ENCODE measurements at regions of chr13 and their contacts with region 1.

Region 1: DNA sequence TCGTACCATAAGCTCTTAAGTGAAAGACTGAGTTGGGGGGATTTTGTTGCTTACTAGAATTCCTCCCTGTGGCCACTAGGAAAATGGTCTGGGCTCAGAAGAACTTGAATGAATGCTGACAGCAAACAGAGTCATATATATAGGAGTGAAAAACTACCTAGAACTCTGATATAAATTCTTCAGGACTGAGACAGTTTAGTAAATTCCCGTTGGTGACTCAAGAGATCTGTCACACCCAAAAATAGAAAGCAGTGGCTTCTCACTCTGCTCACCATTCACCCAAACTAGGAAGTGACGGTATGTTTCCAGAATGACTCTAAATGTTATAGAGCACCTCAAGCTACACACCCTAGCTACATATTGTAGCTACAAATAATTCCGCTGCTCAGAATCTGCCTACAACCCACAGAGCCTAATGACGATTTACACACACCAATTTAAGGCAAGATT is 116.2 kb downstream of the TBC1D4 start:
- DNase-seq: peak; percentile 78
- ATAC-seq: peak; percentile 97
- H3K4me3 ChIP-seq: peak overlapping the region; percentile 34
- H3K27ac ChIP-seq: peak overlapping the region; percentile 81
- H3K4me1 ChIP-seq: peaks cover 13% of the 10 kb centered on the region; the same call in 1 of the 2 replicates
- H3K27me3 ChIP-seq: no peaks in the 10 kb centered on the region
- CTCF ChIP-seq: no peak
- EP300 ChIP-seq: peak; percentile 83 to 86; a peak in 3 of 4 replicates
- POLR2A ChIP-seq: no peak
- RAD21 ChIP-seq: no peak

Region 2: GRCh38 chr13:74641586-74641985 is 724.2 kb before region 1 on chr13:
- CTCF ChIA-PET with region 1: no interaction called
- POLR2A ChIA-PET with region 1: no interaction called
- RAD21 ChIA-PET with region 1: no interaction called
- SMC1A ChIA-PET with region 1: no interaction called
- in situ Hi-C with region 1: no loop called
- intact Hi-C with region 1: no loop called
- DNase-seq: no peak
- ATAC-seq: no peak
- H3K4me3 ChIP-seq: no peak overlapping the region
- H3K27ac ChIP-seq: no peak overlapping the region
- H3K4me1 ChIP-seq: no peaks in the 10 kb centered on the region
- H3K27me3 ChIP-seq: peaks cover 0 to 2% of the 10 kb centered on the region in 2 experiments; a peak in 2 of 4 replicates
- CTCF ChIP-seq: no peak
- EP300 ChIP-seq: no peak
- POLR2A ChIP-seq: no peak
- RAD21 ChIP-seq: no peak

Region 3: DNA sequence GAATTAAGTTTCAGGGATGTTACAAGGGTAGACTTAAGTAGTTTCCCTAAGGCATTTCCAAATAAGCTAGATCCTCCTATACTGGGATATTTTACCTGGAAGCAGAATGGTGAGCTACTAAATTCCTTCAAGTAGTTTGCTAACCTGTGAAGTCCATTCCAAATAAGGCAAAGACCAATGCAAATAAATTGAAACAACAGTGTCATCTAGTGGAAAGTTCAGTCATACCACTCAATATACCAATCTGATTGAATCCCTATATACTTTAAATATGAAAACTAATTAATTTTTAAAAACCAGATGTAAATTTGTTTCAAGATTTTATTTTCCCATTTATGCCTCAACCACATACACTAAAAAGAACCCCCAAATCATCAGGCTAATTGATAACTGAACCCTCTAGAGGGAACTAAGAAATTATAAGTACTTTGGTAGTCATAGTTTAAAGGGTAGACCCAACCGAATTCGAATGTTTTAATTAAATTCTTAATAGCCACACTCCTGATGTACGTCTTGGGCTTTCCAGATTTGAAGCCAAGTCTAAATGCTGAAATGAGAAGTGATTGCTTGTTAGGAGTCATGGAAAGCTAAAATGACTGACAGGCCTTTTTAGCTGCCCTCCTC is 107.5 kb before region 1 on chr13:
- CTCF ChIA-PET with region 1: interaction called, 12 read pairs
- POLR2A ChIA-PET with region 1: no interaction called
- RAD21 ChIA-PET with region 1: interaction called, 8 read pairs
- SMC1A ChIA-PET with region 1: interaction called, 7 read pairs
- in situ Hi-C with region 1: no loop called
- intact Hi-C with region 1: no loop called
- DNase-seq: no peak
- ATAC-seq: peak; percentile 82
- H3K4me3 ChIP-seq: no peak overlapping the region
- H3K27ac ChIP-seq: no peak overlapping the region
- H3K4me1 ChIP-seq: no peaks in the 10 kb centered on the region
- H3K27me3 ChIP-seq: 0 out of 4 replicates have a peak, but pooled peaks cover 0 to 3% of the 10 kb centered on the region in 2 experiments
- CTCF ChIP-seq: peak; percentile 39 to 56 (median 53); a peak in 4 of 6 replicates
- EP300 ChIP-seq: no peak
- POLR2A ChIP-seq: no peak
- RAD21 ChIP-seq: peak; percentile 56

Region 4: DNA sequence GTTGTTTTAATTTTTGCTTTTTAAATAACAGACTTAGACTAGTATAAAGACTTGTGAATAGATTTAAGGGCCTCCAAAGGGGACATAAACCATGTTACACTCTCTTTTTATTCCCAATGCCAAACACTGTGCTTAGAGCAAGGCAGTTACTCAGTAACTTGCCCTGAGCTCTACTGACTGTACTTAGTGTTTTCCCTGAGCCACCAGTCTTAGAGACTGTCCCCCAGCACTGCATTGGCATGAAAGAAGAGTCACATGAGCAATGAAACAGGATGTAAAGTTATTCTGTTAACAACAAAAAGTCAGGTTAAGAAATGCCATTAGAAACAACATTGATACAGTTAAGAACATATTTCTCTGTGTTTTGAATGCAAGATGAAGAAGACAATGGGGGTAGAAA is 71.6 kb before region 1 on chr13:
- CTCF ChIA-PET with region 1: interaction called, 4 read pairs
- POLR2A ChIA-PET with region 1: no interaction called
- RAD21 ChIA-PET with region 1: interaction called, 10 read pairs
- SMC1A ChIA-PET with region 1: interaction called, 7 read pairs
- in situ Hi-C with region 1: no loop called
- intact Hi-C with region 1: no loop called
- DNase-seq: no peak
- ATAC-seq: peak; percentile 62
- H3K4me3 ChIP-seq: no peak overlapping the region
- H3K27ac ChIP-seq: no peak overlapping the region
- H3K4me1 ChIP-seq: peaks cover 3% of the 10 kb centered on the region
- H3K27me3 ChIP-seq: no peaks in the 10 kb centered on the region
- CTCF ChIP-seq: no peak
- EP300 ChIP-seq: no peak
- POLR2A ChIP-seq: no peak
- RAD21 ChIP-seq: no peak

Region 5: DNA sequence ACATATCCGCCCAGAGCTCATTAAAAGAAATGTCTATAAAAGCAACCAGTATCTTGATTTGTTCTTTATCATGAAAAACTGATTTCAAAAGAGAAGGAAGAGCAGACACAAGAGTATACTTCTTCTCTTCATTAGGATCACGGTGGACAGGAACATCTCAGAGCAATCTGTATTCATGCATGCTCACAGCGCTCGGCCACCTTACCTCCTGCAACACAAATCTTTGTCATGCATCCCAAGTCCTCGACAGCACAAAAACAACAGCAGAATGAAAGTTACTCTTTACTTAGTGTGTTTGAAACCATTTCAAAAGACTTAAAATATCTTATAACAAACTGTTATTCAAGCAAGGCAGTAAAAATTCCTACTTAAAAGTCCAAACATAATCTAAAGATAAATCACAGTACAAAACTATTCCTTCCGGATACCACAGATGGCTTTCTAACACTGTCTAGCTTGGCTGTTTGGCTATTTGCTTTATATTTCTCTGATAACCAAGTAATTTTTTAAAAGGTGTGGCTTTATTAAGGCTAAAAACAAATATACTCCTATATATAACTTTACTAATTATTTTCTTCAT is 58.3 kb before region 1 on chr13:
- CTCF ChIA-PET with region 1: interaction called, 5 read pairs
- POLR2A ChIA-PET with region 1: interaction called, 4 read pairs
- RAD21 ChIA-PET with region 1: interaction called, 33 read pairs
- SMC1A ChIA-PET with region 1: interaction called, 11 read pairs
- in situ Hi-C with region 1: no loop called
- intact Hi-C with region 1: no loop called
- DNase-seq: no peak
- ATAC-seq: no peak
- H3K4me3 ChIP-seq: no peak overlapping the region; the same call in 1 of the 2 replicates
- H3K27ac ChIP-seq: no peak overlapping the region
- H3K4me1 ChIP-seq: no peaks in the 10 kb centered on the region; the same call in 1 of the 2 replicates
- H3K27me3 ChIP-seq: no peaks in the 10 kb centered on the region
- CTCF ChIP-seq: no peak
- EP300 ChIP-seq: no peak
- POLR2A ChIP-seq: no peak
- RAD21 ChIP-seq: no peak

Region 6: DNA sequence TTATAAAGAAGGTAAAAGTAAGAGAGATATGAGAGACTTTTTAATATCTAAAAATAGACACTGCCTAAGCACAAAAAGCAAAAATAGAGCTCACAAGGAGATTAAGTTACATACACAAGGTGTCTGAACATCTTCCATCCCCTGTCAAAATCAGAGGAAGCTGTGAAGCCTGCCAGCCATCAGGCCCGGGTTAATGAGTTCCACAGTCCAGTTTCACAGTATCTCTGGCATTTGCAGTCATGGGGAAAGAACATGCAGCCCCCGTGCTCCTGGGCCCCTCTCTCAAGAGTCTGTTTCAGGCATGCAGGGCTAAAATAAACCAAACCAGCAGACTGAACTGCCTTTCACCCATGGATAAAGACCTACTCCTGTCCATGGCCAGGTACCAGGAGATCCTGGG is 37.0 kb after region 1 on chr13:
- CTCF ChIA-PET with region 1: interaction called, 31 read pairs
- POLR2A ChIA-PET with region 1: interaction called, 4 read pairs
- RAD21 ChIA-PET with region 1: interaction called, 8 read pairs
- SMC1A ChIA-PET with region 1: interaction called, 12 read pairs
- in situ Hi-C with region 1: no loop called
- intact Hi-C with region 1: no loop called
- DNase-seq: no peak
- ATAC-seq: no peak
- H3K4me3 ChIP-seq: no peak overlapping the region
- H3K27ac ChIP-seq: no peak overlapping the region
- H3K4me1 ChIP-seq: no peaks in the 10 kb centered on the region
- H3K27me3 ChIP-seq: no peaks in the 10 kb centered on the region
- CTCF ChIP-seq: no peak
- EP300 ChIP-seq: no peak
- POLR2A ChIP-seq: no peak
- RAD21 ChIP-seq: no peak

Region 7: GRCh38 chr13:75549262-75550158 is 183.8 kb after region 1 on chr13 and contains the start of gene UCHL3:
- CTCF ChIA-PET with region 1: interaction called, 12 read pairs
- POLR2A ChIA-PET with region 1: no interaction called
- RAD21 ChIA-PET with region 1: interaction called, 20 read pairs
- SMC1A ChIA-PET with region 1: interaction called, 4 read pairs
- in situ Hi-C with region 1: loop called (anchors 5 kb)
- intact Hi-C with region 1: no loop called
- DNase-seq: peak; percentile 89
- ATAC-seq: peak; percentile 97
- H3K4me3 ChIP-seq: peak within 1 kb of the TSS; percentile 86
- H3K27ac ChIP-seq: peak within 1 kb of the TSS; percentile 82
- H3K4me1 ChIP-seq: peaks cover 9% of the 10 kb centered on the region
- H3K27me3 ChIP-seq: no peaks in the 10 kb centered on the region
- CTCF ChIP-seq: peak; percentile 95 to 99 (median 96); a peak in 5 of 6 replicates
- EP300 ChIP-seq: 0 out of 4 replicates have a peak, but pooled peaks of 1 of the 2 experiments have one; percentile 35
- POLR2A ChIP-seq: peak; percentile 97
- RAD21 ChIP-seq: peak; percentile 88
- polyA plus RNA-seq, gene UCHL3: 163 to 166 TPM

Measured in GM12878 (cell line).